Activated naive CD4-positive, alpha-beta T cell treated with anti-CD3 and anti-CD28 coated beads for 36 hours (primary cell): ENCODE measurements at regions of chr5 and their contacts with region 1.

Region 1: DNA sequence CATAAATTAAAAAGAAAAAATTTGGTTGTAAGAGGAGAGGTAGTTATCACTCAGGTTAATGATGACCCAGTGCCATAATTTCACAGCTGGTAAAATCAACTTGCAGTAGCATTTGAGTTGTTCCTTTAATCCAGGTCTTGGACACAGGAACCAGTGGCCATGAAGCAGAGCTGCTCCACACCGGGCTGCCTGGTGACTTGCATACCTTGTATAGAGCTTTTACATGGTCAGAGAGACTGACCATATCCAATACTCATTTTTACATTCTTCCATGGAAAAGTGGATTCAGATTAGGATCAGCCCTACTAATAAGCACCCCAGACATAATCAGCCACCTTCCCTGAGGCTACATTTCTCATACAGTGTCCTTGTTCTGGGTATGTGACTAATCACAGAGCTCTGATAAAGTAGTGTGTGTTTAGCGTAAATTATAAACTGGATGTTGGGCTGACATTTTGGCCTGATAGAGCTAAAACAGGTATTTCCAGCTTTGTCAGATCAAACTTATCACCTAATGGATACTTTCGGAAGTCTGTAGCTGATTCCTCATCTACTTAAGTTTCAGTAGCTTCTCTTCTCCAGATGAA is 77.0 kb upstream of the ZSWIM6 start:
- DNase-seq: no peak
- H3K4me3 Mint-ChIP-seq: no peak overlapping the region
- H3K27ac Mint-ChIP-seq: no peak overlapping the region
- H3K4me1 Mint-ChIP-seq: no peaks in the 10 kb centered on the region
- H3K27me3 Mint-ChIP-seq: peaks cover 4% of the 10 kb centered on the region

Region 2: DNA sequence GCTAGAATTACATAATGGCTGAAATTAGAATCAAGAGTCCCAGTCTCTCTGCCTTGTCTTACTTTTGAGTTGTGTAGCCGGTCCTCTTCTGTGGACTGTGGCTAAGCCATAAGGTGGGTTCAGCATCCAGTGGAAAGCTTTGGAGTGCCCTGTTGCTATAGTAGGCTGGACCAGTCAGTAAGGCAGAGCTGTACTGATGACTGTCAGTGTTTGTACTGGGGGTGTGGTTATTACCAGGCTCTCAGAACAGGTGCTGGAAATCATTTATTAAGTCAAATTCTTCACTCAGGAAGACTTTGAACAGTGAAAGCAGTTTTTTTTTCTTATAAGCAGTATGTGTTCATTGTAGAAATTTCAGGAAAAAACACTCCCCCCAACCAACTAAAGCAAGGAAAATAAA is 206.4 kb after region 1 on chr5:
- CTCF ChIA-PET with region 1: no interaction called
- intact Hi-C with region 1: no loop called
- DNase-seq: no peak
- H3K4me3 Mint-ChIP-seq: no peak overlapping the region
- H3K27ac Mint-ChIP-seq: no peak overlapping the region
- H3K4me1 Mint-ChIP-seq: peaks cover 4% of the 10 kb centered on the region
- H3K27me3 Mint-ChIP-seq: no peaks in the 10 kb centered on the region

Region 3: GRCh38 chr5:61854531-61854930 is 599.5 kb after region 1 on chr5:
- CTCF ChIA-PET with region 1: no interaction called
- intact Hi-C with region 1: loop called (anchors 5 kb)
- DNase-seq: no peak
- H3K4me3 Mint-ChIP-seq: no peak overlapping the region
- H3K27ac Mint-ChIP-seq: no peak overlapping the region
- H3K4me1 Mint-ChIP-seq: no peaks in the 10 kb centered on the region
- H3K27me3 Mint-ChIP-seq: no peaks in the 10 kb centered on the region